Pancreas (tissue), 10 donors: ENCODE measurements at regions of chr2 and their contacts with region 1.

Region 1: DNA sequence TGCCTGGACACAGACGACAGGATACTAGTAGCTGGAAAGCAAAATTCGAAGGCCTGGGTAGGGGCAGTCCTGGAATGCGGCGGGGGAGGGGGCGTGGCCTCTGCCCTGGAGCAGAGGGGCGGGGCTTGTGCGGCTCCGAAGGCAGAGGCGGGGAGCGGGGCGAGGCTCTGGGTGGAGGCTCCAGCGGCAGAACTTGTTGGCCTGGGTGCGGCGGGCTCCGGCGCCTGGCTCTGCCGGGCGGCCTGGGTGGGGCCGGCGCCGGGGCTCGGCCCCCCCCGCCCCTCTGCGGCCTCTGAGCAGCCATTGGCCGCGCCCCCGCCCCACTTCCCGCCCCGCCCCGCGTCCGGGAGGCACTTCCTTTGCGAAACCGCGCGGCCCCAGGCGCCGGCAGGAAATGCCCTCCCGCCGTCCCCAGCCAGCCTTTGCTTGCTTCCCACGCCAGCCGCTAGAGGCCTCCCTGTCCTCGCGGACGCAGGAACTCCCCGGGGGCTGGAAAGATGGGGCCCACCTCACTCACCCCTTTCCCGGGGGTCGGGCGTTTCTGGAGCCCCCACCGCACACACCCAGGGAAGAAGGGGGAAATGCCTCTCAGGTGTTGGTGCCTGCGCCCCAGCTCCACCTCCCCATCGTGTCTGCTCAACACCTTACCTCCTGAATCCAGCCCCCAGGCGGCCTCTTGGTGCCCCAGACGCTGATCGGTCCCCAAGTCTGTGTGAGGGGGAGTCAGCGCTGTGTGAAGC is 6.7 kb downstream of the CTDSP1 start:
- DNase-seq: peak; percentile 97 to 99 (median 98)
- ATAC-seq: peak; percentile 85 to 88 (median 86)
- H3K4me3 ChIP-seq: peak overlapping the region in 3 of 4 donors; percentile 23 to 44 (median 34)
- H3K27ac ChIP-seq: peak overlapping the region; percentile 65 to 89 (median 76)
- H3K4me1 ChIP-seq: peaks cover 9 to 19% (median 17%) of the 10 kb centered on the region in 3 donors
- H3K27me3 ChIP-seq: no peaks in the 10 kb centered on the region
- CTCF ChIP-seq: peak; percentile 45 to 74 (median 64)

Region 2: GRCh38 chr2:218659258-218659987 is 253.0 kb after region 1 on chr2 and contains the starts of genes BCS1L and ZNF142:
- intact Hi-C with region 1: loop called in 2 of 3 experiments (anchors 5 to 10 kb)
- DNase-seq: peak; percentile 83 to 95 (median 90)
- ATAC-seq: peak; percentile 97 to 99 (median 98)
- H3K4me3 ChIP-seq: peak within 1 kb of the TSS; percentile 75 to 95 (median 82)
- H3K27ac ChIP-seq: peak within 1 kb of the TSS in 3 of 4 donors; percentile 18 to 53 (median 48)
- H3K4me1 ChIP-seq: peaks cover 0 to 15% (median 11%) of the 10 kb centered on the region in 3 donors
- H3K27me3 ChIP-seq: no peaks in the 10 kb centered on the region
- CTCF ChIP-seq: no peak
- total RNA-seq, gene BCS1L: 16.3 to 34.1 (median 23.1) TPM
- total RNA-seq, gene ZNF142: 8.6 to 16.7 (median 9.9) TPM